ENCODE measurements at regions of chr2 and their contacts with region 1.

Region 1: DNA sequence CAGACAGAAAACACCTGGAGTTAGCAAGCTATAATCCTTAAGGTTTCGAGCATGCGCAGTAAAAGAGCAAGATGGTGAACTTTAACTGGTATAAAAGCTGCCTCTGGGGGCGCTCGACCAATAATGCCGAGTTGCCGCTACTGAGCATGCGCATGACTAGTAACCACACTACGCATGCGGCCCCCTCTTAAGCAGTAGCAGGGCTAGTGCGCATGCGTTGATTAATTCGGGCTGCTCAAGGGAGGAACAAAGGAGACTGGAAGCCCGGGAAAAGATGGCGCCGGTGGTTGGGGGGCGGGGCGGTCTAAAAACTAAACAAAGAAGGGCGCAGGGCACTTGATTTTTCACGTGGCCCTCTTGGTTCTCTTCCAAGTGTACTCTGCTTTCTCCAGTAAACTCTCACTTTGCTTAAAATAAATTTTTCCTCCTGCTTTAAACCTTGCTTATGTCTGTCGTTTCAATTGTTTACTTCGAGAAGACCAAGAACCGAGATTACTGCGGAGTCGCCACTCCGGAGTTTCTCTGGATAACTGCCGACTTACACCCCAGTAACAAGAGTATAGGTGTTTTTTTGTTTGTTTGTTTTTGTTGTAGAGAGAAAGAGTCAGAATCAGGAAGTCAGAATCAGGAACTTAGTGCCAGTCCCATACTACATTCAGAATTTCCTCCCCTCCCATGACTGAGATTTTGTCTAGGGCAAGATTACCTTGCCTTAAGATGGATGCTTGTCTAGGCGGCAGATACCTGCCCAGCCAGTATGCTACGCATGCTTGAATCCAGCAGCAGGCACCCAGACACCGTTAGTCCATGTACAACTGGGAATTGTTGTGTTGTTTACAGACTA is 5.8 kb downstream of the XRCC5 start:
- DNase-seq: peak; percentile 98
- ATAC-seq: peak; percentile 91
- H3K4me3 ChIP-seq: peak overlapping the region; percentile 44 to 56
- H3K27ac ChIP-seq: peak overlapping the region; percentile 23
- H3K4me1 ChIP-seq: peaks cover 7 to 22% of the 10 kb centered on the region in 2 experiments; a peak in 3 of 4 replicates
- H3K27me3 ChIP-seq: no peaks in the 10 kb centered on the region
- CTCF ChIP-seq: peak; percentile 50 to 89 (median 78); a peak in 5 of 6 replicates
- POLR2A ChIP-seq: no peak
- RAD21 ChIP-seq: no peak

Region 2: DNA sequence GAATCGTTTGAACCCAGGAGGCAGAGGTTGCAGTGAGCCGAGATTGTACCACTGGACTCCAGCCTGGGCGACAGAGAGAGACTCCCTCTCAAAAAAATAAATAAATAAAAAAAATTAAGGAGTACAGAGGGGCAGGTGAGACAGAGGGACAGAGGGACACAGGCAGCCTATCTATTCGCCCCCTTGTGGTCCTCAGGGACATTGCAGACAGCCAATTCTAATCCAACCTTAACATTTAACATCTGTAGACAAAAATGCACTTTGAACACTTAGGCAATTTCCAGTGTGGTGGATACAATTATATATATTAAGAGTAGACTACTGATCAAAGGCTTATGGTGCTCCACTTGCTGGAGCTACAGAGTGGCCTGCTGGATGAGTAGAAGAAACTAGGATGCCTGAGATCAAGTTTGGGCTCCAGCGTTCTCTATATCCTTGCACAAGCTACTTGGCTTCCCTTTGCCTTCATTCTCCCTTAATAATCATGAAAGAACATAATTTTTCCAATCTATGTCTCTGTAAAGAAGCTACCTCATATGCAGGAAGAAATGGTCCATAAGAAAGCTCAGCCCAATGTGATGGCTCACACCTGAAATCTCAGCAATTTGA is 289.2 kb after region 1 on chr2:
- CTCF ChIA-PET with region 1: no interaction called
- POLR2A ChIA-PET with region 1: no interaction called
- RAD21 ChIA-PET with region 1: no interaction called
- intact Hi-C with region 1: loop called (anchors 5 kb)
- DNase-seq: peak; percentile 35
- ATAC-seq: peak; percentile 91
- H3K4me3 ChIP-seq: no peak overlapping the region
- H3K27ac ChIP-seq: no peak overlapping the region
- H3K4me1 ChIP-seq: no peaks in the 10 kb centered on the region
- H3K27me3 ChIP-seq: peaks cover 20% of the 10 kb centered on the region
- CTCF ChIP-seq: peak; percentile 62 to 86 (median 67)
- POLR2A ChIP-seq: no peak
- RAD21 ChIP-seq: peak; percentile 75

Region 3: DNA sequence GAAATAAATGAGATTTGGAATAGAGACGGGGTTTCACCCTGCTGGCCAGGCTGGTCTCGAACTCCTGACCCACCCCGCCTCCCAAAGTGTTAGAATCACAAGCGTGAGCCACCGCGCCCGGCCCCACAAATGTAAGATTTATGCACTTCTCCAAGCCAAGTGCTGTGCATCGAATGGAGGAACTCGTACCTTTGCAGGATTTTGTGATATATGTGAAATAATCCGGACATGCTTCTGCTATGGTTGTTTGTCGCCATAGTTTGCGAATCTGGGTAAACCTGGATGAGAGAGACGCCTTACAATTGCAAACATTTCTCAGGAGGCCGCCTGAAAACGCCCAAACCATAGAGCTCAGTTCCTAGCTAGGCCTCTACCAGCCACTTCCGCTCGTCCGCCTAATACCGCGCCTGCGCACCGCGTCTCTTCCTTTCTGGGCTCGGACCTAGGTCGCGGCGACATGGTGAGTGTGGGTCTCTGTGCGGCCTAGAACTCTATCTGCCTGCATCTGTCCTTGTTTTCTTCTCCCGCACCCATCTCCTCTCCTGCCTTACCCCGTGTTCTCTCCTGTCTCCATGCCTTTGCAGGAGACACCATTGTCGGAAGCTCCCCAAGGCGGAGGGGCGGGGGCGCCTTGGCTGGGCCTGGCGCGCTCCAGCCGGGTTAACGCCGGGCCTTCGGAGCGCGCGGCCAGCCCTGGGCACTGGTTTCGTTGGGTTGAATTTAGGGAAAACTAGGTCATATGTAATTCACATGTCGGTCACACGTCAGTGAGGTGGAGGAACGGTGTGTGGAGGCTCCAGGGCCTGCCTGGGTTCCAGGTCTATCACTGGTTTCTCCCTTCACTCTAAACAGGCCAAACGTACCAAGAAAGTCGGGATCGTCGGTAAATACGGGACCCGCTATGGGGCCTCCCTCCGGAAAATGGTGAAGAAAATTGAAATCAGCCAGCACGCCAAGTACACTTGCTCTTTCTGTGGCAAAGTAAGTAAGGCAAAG is 383.8 kb after region 1 on chr2 and contains the start of gene RPL37A:
- CTCF ChIA-PET with region 1: no interaction called
- POLR2A ChIA-PET with region 1: no interaction called
- RAD21 ChIA-PET with region 1: no interaction called
- intact Hi-C with region 1: loop called (anchors 5 kb)
- DNase-seq: peak; percentile 94
- ATAC-seq: peak; percentile 90
- H3K4me3 ChIP-seq: peak within 1 kb of the TSS; percentile 86 to 98
- H3K27ac ChIP-seq: peak within 1 kb of the TSS; percentile 87
- H3K4me1 ChIP-seq: peaks cover 4 to 29% of the 10 kb centered on the region in 2 experiments; a peak in 3 of 4 replicates
- H3K27me3 ChIP-seq: no peaks in the 10 kb centered on the region
- CTCF ChIP-seq: no peak
- POLR2A ChIP-seq: peak; percentile 98
- RAD21 ChIP-seq: no peak
- total RNA-seq, gene RPL37A: 3,018 TPM